K562 (cell line): ENCODE measurements at regions of chr4 and their contacts with region 1.

Region 1: DNA sequence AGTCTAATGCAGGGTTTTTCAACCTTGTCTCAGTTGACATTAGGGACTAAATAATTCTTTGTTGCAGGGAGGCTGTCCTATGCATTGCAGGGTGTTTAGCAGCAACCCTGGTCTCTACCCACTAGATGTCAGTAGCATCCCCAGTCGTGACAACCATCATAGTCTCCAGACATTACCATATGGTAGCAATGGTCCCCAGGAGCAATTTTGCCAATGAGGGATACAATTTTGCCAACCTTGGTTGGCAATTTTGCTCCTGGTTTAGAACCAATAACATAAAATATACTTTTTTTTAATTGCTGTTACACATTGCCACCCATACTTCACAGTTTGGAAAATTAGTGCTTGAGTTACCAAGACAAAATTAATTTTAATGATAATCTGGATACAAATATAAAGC is 6.0 kb downstream of the EREG start:
- DNase-seq: peak; percentile 23 to 85 (median 44)
- ATAC-seq: peak; percentile 84
- H3K4me3 ChIP-seq: no peak overlapping the region
- H3K27ac ChIP-seq: peak overlapping the region; percentile 37; the same call in 1 of the 3 replicates
- H3K4me1 ChIP-seq: peaks cover 0 to 15% of the 10 kb centered on the region in 2 experiments; a peak in 2 of 5 replicates
- H3K27me3 ChIP-seq: no peaks in the 10 kb centered on the region
- CTCF ChIP-seq: peak; percentile 82 to 85 (median 82)
- EP300 ChIP-seq: no peak
- POLR2A ChIP-seq: no peak
- RAD21 ChIP-seq: peak; percentile 78 to 81

Region 2: GRCh38 chr4:74320559-74321118 is 50.3 kb before region 1 on chr4:
- CTCF ChIA-PET with region 1: no interaction called
- POLR2A ChIA-PET with region 1: no interaction called
- in situ Hi-C with region 1: no loop called
- intact Hi-C with region 1: loop called (anchors 2 kb)
- DNase-seq: peak; percentile 17 to 77 (median 40)
- ATAC-seq: peak; percentile 73
- H3K4me3 ChIP-seq: no peak overlapping the region
- H3K27ac ChIP-seq: peak overlapping the region; percentile 2; the same call in 1 of the 3 replicates
- H3K4me1 ChIP-seq: peaks cover 5 to 30% of the 10 kb centered on the region in 2 experiments
- H3K27me3 ChIP-seq: no peaks in the 10 kb centered on the region
- CTCF ChIP-seq: peak; percentile 65 to 78 (median 68); a peak in 5 of 6 replicates
- EP300 ChIP-seq: no peak
- POLR2A ChIP-seq: no peak
- RAD21 ChIP-seq: peak; percentile 78 to 84

Region 3: DNA sequence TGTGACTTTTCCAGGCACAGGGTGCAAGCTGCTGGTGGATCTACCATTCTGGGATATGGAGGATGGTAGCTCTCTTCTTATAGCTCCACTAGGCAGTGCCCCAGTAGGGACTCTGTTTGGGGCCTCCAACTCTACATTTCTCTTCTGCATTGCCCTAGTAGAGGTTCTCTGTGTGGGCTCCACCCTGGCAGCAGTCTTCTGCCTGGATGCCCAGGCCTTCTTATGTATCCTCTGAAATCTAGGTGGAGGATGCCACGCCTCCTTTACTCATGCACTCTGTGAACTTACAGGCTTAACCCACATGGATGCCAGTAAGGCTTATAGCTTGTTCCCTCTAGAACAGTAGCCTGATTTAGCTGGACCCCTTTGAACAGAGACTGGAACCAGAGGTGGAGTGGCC is 26.9 kb before region 1 on chr4:
- CTCF ChIA-PET with region 1: no interaction called
- POLR2A ChIA-PET with region 1: no interaction called
- in situ Hi-C with region 1: no loop called
- intact Hi-C with region 1: no loop called
- DNase-seq: no peak
- ATAC-seq: no peak
- H3K4me3 ChIP-seq: no peak overlapping the region
- H3K27ac ChIP-seq: no peak overlapping the region
- H3K4me1 ChIP-seq: no peaks in the 10 kb centered on the region; a peak in 1 of 5 replicates
- H3K27me3 ChIP-seq: no peaks in the 10 kb centered on the region
- CTCF ChIP-seq: no peak
- EP300 ChIP-seq: no peak
- POLR2A ChIP-seq: no peak
- RAD21 ChIP-seq: no peak

Region 4: DNA sequence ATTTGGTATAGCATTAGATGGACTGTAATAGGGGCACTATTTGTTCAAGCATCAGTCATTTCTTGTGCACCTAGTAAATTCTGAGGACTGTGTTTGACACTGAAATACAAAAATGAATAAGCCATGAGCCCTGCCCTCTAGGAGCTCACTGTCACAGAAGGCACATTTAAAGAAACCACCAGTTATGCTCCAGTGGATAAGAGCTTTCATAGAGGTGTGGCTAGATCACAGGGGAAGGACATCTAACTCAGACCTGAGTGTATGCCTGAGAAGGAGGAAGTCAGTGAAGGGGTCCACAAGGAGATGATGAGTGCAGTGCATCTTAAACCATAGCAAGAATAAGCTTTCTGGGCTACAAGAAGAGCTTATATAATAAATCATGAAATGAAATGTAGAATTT is 383.3 kb after region 1 on chr4:
- CTCF ChIA-PET with region 1: no interaction called
- POLR2A ChIA-PET with region 1: no interaction called
- in situ Hi-C with region 1: no loop called
- intact Hi-C with region 1: no loop called
- DNase-seq: no peak
- ATAC-seq: no peak
- H3K4me3 ChIP-seq: no peak overlapping the region
- H3K27ac ChIP-seq: no peak overlapping the region
- H3K4me1 ChIP-seq: no peaks in the 10 kb centered on the region
- H3K27me3 ChIP-seq: peaks cover 12 to 13% of the 10 kb centered on the region in 2 experiments; a peak in 4 of 5 replicates
- CTCF ChIP-seq: no peak
- EP300 ChIP-seq: no peak
- POLR2A ChIP-seq: no peak
- RAD21 ChIP-seq: no peak